K562 (cell line): ENCODE measurements at regions of chr7 and their contacts with region 1.

Region 1: DNA sequence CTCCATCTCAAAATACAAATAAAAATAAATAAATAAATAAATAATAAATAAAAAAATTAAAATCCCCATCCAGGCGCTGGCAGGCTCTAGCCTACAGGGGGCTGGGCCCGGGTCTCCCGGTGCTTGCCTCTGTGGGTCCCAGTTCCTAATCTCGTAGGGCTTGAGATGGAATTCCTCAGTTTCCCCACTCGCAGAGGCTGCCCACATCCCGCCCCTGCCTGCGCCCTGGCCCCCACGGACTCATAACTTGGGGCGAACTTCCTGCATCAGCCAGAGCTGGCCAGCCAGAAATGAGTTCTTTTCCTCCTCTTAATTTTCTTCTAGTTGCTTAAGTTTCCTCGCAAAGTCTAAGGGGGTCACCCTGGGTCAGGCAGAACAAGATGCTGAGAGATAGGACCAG is 22.0 kb upstream of the SRRM3 start:
- DNase-seq: peak in 1 of 4 experiments; percentile 36
- ATAC-seq: no peak
- H3K4me3 ChIP-seq: no peak overlapping the region
- H3K27ac ChIP-seq: no peak overlapping the region
- H3K4me1 ChIP-seq: peaks cover 0 to 11% of the 10 kb centered on the region in 2 experiments; a peak in 2 of 5 replicates
- H3K27me3 ChIP-seq: peaks cover 4 to 15% of the 10 kb centered on the region in 2 experiments; a peak in 3 of 5 replicates
- CTCF ChIP-seq: no peak
- EP300 ChIP-seq: no peak
- POLR2A ChIP-seq: no peak
- RAD21 ChIP-seq: no peak

Region 2: GRCh38 chr7:76216381-76217082 is 36.8 kb after region 1 on chr7:
- CTCF ChIA-PET with region 1: no interaction called
- POLR2A ChIA-PET with region 1: no interaction called
- in situ Hi-C with region 1: no loop called
- intact Hi-C with region 1: no loop called
- DNase-seq: no peak
- ATAC-seq: no peak
- H3K4me3 ChIP-seq: no peak overlapping the region
- H3K27ac ChIP-seq: no peak overlapping the region
- H3K4me1 ChIP-seq: peaks cover 0 to 4% of the 10 kb centered on the region in 2 experiments; a peak in 1 of 5 replicates
- H3K27me3 ChIP-seq: peaks cover 11 to 71% of the 10 kb centered on the region in 2 experiments; a peak in 4 of 5 replicates
- CTCF ChIP-seq: no peak
- EP300 ChIP-seq: no peak
- POLR2A ChIP-seq: no peak
- RAD21 ChIP-seq: no peak

Region 3: GRCh38 chr7:76244781-76245391 is 65.2 kb after region 1 on chr7:
- CTCF ChIA-PET with region 1: no interaction called
- POLR2A ChIA-PET with region 1: no interaction called
- in situ Hi-C with region 1: no loop called
- intact Hi-C with region 1: no loop called
- DNase-seq: no peak
- ATAC-seq: no peak
- H3K4me3 ChIP-seq: no peak overlapping the region
- H3K27ac ChIP-seq: no peak overlapping the region
- H3K4me1 ChIP-seq: no peaks in the 10 kb centered on the region; a peak in 1 of 5 replicates
- H3K27me3 ChIP-seq: peaks cover 16 to 34% of the 10 kb centered on the region in 2 experiments; a peak in 4 of 5 replicates
- CTCF ChIP-seq: no peak
- EP300 ChIP-seq: no peak
- POLR2A ChIP-seq: no peak
- RAD21 ChIP-seq: no peak

Region 4: GRCh38 chr7:76262683-76263402 is 83.2 kb after region 1 on chr7:
- CTCF ChIA-PET with region 1: interaction called, 21 read pairs
- POLR2A ChIA-PET with region 1: interaction called, 4 read pairs
- in situ Hi-C with region 1: loop called (anchors 5 kb)
- intact Hi-C with region 1: loop called (anchors 1 kb)
- DNase-seq: peak; percentile 69 to 86 (median 74)
- ATAC-seq: peak; percentile 83
- H3K4me3 ChIP-seq: no peak overlapping the region
- H3K27ac ChIP-seq: no peak overlapping the region
- H3K4me1 ChIP-seq: peaks cover 0 to 36% of the 10 kb centered on the region in 2 experiments; a peak in 4 of 5 replicates
- H3K27me3 ChIP-seq: peaks cover 4 to 25% of the 10 kb centered on the region in 2 experiments; a peak in 3 of 5 replicates
- CTCF ChIP-seq: peak; percentile 91 to 96 (median 95)
- EP300 ChIP-seq: no peak
- POLR2A ChIP-seq: no peak
- RAD21 ChIP-seq: peak; percentile 82 to 87

Region 5: GRCh38 chr7:76291343-76292212 is 111.9 kb after region 1 on chr7:
- CTCF ChIA-PET with region 1: no interaction called
- POLR2A ChIA-PET with region 1: no interaction called
- in situ Hi-C with region 1: no loop called
- intact Hi-C with region 1: loop called (anchors 1 kb)
- DNase-seq: peak; percentile 90 to 96 (median 90)
- ATAC-seq: peak; percentile 93
- H3K4me3 ChIP-seq: no peak overlapping the region
- H3K27ac ChIP-seq: peak overlapping the region; percentile 38; the same call in 1 of the 3 replicates
- H3K4me1 ChIP-seq: peaks cover 23 to 35% of the 10 kb centered on the region in 2 experiments
- H3K27me3 ChIP-seq: no peaks in the 10 kb centered on the region; a peak in 1 of 5 replicates
- CTCF ChIP-seq: peak; percentile 97 to 99 (median 99)
- EP300 ChIP-seq: peak; percentile 89
- POLR2A ChIP-seq: no peak
- RAD21 ChIP-seq: peak; percentile 97